AG04449 (cell line): ENCODE measurements at regions of chr9 and their contacts with region 1.

Region 1: GRCh38 chr9:121059998-121060636 is 10.0 kb upstream of the C5 start:
- DNase-seq: no peak
- H3K4me3 ChIP-seq: no peak overlapping the region
- CTCF ChIP-seq: peak; percentile 59

Region 2: DNA sequence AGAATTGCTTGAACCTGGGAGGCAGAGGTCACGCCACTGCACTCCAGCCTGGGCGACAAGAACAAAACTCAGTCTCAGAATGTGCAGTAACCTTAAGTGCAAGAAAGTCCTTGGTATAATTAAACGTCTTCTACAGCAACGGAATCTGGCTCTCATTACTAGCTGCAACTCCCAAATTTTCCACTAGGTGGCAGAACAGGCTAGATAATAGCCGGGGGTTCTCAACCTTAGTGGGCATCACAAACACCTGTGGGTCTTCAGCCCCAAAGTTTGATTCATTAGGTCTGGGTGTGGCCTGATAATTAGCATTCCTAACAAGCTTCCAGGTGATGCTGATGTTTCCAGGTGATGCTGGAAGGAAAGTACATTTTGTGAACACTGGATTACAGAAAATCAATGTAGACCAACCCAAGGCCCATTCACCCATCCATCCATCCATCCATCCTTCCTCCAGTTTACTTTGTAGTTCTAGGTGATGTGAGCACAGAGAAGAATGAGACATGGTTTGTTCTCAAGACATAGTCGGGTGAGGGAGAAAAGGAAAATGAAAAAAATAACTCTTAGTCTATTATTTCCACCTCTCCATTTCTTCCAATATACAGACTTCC is 304.2 kb before region 1 on chr9:
- CTCF ChIA-PET with region 1: interaction called, 137 read pairs
- POLR2A ChIA-PET with region 1: no interaction called
- DNase-seq: no peak
- H3K4me3 ChIP-seq: no peak overlapping the region
- CTCF ChIP-seq: peak; percentile 68

Region 3: GRCh38 chr9:121034529-121034928 is 25.6 kb before region 1 on chr9:
- CTCF ChIA-PET with region 1: interaction called, 21 read pairs
- POLR2A ChIA-PET with region 1: no interaction called
- DNase-seq: no peak
- H3K4me3 ChIP-seq: no peak overlapping the region
- CTCF ChIP-seq: no peak

Region 4: DNA sequence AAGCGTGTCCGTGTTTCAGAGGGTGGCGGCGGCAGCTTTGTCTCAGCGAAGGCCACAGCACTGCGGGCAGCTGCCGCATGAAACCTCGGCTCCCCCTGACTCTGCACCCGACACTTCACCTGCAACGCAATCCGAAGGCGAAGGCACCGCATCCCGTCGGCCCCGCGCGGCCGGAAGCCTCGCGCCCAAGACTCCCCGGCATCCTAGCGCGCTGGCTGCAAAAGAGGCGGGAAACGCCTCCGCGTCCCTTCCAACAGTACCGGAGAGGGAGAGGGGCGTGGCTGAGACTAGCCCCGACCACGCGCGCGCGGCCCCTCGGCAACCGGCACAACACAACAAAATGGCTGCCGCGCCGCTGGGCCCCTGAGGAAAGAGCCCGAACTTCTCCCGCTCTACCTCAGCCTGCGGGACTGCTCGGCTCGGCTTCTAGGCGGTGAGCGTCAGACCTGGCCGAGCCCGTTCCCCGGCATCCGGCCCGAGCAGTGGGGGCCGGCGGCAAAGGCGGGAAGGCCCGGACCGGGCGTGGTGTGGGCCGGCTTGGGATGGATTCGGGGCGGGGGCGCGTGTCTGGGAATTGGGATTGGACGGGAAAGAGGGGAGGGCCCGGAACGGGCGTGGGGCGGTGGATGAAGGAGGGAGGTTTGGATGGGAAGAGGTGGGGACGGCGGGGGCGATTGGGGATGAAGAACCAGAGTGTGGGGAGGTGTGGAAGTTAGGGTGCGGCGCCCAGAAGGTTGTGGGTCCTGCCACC is 14.7 kb after region 1 on chr9 and contains the start of gene CNTRL:
- CTCF ChIA-PET with region 1: interaction called, 85 read pairs
- POLR2A ChIA-PET with region 1: no interaction called
- DNase-seq: no peak
- H3K4me3 ChIP-seq: peak within 1 kb of the TSS; percentile 78
- CTCF ChIP-seq: no peak